CD8-positive, alpha-beta T cell (primary cell): ENCODE measurements at regions of chr9 and their contacts with region 1.

Region 1: GRCh38 chr9:113454914-113455761 is 8.4 kb upstream of the RGS3 start:
- DNase-seq: no peak
- ATAC-seq: no peak
- H3K4me3 ChIP-seq: no peak overlapping the region
- H3K4me3 Mint-ChIP-seq: no peak overlapping the region
- H3K27ac ChIP-seq: no peak overlapping the region
- H3K27ac Mint-ChIP-seq: no peak overlapping the region
- H3K4me1 ChIP-seq: no peaks in the 10 kb centered on the region
- H3K4me1 Mint-ChIP-seq: peaks cover 4% of the 10 kb centered on the region
- H3K27me3 ChIP-seq: no peaks in the 10 kb centered on the region
- H3K27me3 Mint-ChIP-seq: no peaks in the 10 kb centered on the region
- CTCF ChIP-seq: no peak

Region 2: DNA sequence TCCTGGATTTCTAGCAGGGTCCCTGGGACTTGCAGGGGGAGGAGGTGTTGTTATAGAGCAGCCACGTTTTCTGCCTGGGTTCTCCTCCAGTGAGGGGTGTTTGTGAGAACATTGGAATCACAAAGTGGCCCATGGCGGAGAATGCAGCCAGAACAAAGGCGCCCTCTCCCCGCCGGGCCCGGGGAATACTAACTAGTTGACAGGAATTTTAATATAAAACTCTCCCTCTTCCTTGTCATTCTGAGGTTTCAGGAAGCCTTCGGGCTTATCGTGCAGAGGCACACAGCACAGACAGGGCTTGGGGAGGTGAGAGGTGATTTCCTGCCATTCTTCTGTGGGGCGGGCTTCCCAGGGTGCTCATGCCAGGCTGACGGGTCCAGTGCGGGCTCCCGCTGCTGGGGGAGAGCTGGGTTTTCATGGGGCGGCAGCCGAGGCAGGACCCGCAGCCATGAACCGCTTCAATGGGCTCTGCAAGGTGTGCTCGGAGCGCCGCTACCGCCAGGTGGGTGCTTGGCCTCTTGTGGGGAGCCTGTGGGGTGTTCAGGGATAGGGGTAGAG is 46.1 kb after region 1 on chr9:
- CTCF ChIA-PET with region 1: no interaction called
- POLR2A ChIA-PET with region 1: no interaction called
- intact Hi-C with region 1: loop called in 1 of 2 experiments (anchors 5 kb)
- DNase-seq: no peak
- ATAC-seq: no peak
- H3K4me3 ChIP-seq: no peak overlapping the region
- H3K4me3 Mint-ChIP-seq: no peak overlapping the region
- H3K27ac ChIP-seq: no peak overlapping the region
- H3K27ac Mint-ChIP-seq: no peak overlapping the region
- H3K4me1 ChIP-seq: peaks cover 16% of the 10 kb centered on the region
- H3K4me1 Mint-ChIP-seq: peaks cover 20% of the 10 kb centered on the region
- H3K27me3 ChIP-seq: no peaks in the 10 kb centered on the region
- H3K27me3 Mint-ChIP-seq: no peaks in the 10 kb centered on the region
- CTCF ChIP-seq: no peak

Region 3: GRCh38 chr9:113591001-113591898 is 136.1 kb after region 1 on chr9:
- CTCF ChIA-PET with region 1: interaction called, 267 read pairs
- POLR2A ChIA-PET with region 1: interaction called, 4 read pairs
- intact Hi-C with region 1: no loop called
- DNase-seq: peak in 4 of 9 experiments; percentile 48 to 60 (median 53)
- ATAC-seq: no peak
- H3K4me3 ChIP-seq: no peak overlapping the region
- H3K4me3 Mint-ChIP-seq: no peak overlapping the region
- H3K27ac ChIP-seq: no peak overlapping the region
- H3K27ac Mint-ChIP-seq: no peak overlapping the region
- H3K4me1 ChIP-seq: peaks cover 6% of the 10 kb centered on the region
- H3K4me1 Mint-ChIP-seq: peaks cover 27% of the 10 kb centered on the region
- H3K27me3 ChIP-seq: no peaks in the 10 kb centered on the region
- H3K27me3 Mint-ChIP-seq: no peaks in the 10 kb centered on the region
- CTCF ChIP-seq: peak; percentile 50

Region 4: DNA sequence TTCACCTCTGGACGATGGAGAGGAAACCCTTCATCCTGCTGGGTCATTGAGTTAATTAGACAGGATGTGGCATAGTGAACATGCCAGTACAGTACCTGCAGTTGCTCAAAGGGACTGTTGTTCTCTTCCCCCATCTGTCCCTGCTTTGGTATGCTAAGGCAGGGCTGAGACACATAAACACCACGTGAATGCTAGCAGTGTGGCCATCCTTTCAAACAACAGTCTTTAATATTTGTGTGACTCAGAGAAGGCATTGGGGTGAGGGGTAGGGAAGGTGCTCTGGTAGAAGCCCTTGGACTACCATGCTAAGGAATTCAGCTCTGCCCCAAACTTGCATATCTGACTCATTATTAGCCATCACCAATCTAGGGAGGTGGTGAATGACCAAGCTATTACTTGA is 240.8 kb after region 1 on chr9:
- CTCF ChIA-PET with region 1: no interaction called
- POLR2A ChIA-PET with region 1: no interaction called
- intact Hi-C with region 1: no loop called
- DNase-seq: no peak
- ATAC-seq: no peak
- H3K4me3 ChIP-seq: no peak overlapping the region
- H3K4me3 Mint-ChIP-seq: no peak overlapping the region
- H3K27ac ChIP-seq: no peak overlapping the region
- H3K27ac Mint-ChIP-seq: peak overlapping the region; percentile 16
- H3K4me1 ChIP-seq: peaks cover 13% of the 10 kb centered on the region
- H3K4me1 Mint-ChIP-seq: peaks cover 21% of the 10 kb centered on the region
- H3K27me3 ChIP-seq: no peaks in the 10 kb centered on the region
- H3K27me3 Mint-ChIP-seq: peaks cover 42% of the 10 kb centered on the region
- CTCF ChIP-seq: no peak

Region 5: GRCh38 chr9:113853324-113853723 is 398.2 kb after region 1 on chr9:
- CTCF ChIA-PET with region 1: no interaction called
- POLR2A ChIA-PET with region 1: no interaction called
- intact Hi-C with region 1: no loop called
- DNase-seq: no peak
- ATAC-seq: no peak
- H3K4me3 ChIP-seq: no peak overlapping the region
- H3K4me3 Mint-ChIP-seq: no peak overlapping the region
- H3K27ac ChIP-seq: no peak overlapping the region
- H3K27ac Mint-ChIP-seq: no peak overlapping the region
- H3K4me1 ChIP-seq: no peaks in the 10 kb centered on the region
- H3K4me1 Mint-ChIP-seq: no peaks in the 10 kb centered on the region
- H3K27me3 ChIP-seq: peaks cover 0 to 4% of the 10 kb centered on the region in 2 experiments
- H3K27me3 Mint-ChIP-seq: peaks cover 21% of the 10 kb centered on the region
- CTCF ChIP-seq: no peak